IMR-90 (cell line): ENCODE measurements at regions of chrX and their contacts with region 1.

Region 1: GRCh38 chrX:16039834-16040233 is 83.5 kb upstream of the GRPR start:
- DNase-seq: no peak
- ATAC-seq: no peak
- H3K4me3 ChIP-seq: no peak overlapping the region
- H3K27ac ChIP-seq: no peak overlapping the region
- H3K4me1 ChIP-seq: no peaks in the 10 kb centered on the region
- H3K27me3 ChIP-seq: peaks cover 2% of the 10 kb centered on the region; the same call in 1 of the 2 replicates
- CTCF ChIP-seq: no peak
- POLR2A ChIP-seq: no peak
- RAD21 ChIP-seq: no peak

Region 2: GRCh38 chrX:15714529-15714928 is 325.3 kb before region 1 on chrX:
- CTCF ChIA-PET with region 1: no interaction called
- POLR2A ChIA-PET with region 1: no interaction called
- dilution Hi-C with region 1: no loop called
- in situ Hi-C with region 1: no loop called
- intact Hi-C with region 1: no loop called
- DNase-seq: no peak
- ATAC-seq: no peak
- H3K4me3 ChIP-seq: no peak overlapping the region
- H3K27ac ChIP-seq: no peak overlapping the region
- H3K4me1 ChIP-seq: no peaks in the 10 kb centered on the region
- H3K27me3 ChIP-seq: no peaks in the 10 kb centered on the region
- CTCF ChIP-seq: no peak
- POLR2A ChIP-seq: no peak
- RAD21 ChIP-seq: no peak

Region 3: GRCh38 chrX:15877380-15877779 is 162.5 kb before region 1 on chrX:
- CTCF ChIA-PET with region 1: no interaction called
- POLR2A ChIA-PET with region 1: no interaction called
- dilution Hi-C with region 1: no loop called
- in situ Hi-C with region 1: no loop called
- intact Hi-C with region 1: no loop called
- DNase-seq: peak; percentile 68
- ATAC-seq: peak; percentile 40; the same call in 1 of the 2 replicates
- H3K4me3 ChIP-seq: no peak overlapping the region
- H3K27ac ChIP-seq: no peak overlapping the region
- H3K4me1 ChIP-seq: no peaks in the 10 kb centered on the region
- H3K27me3 ChIP-seq: peaks cover 6% of the 10 kb centered on the region; the same call in 1 of the 2 replicates
- CTCF ChIP-seq: no peak
- POLR2A ChIP-seq: no peak
- RAD21 ChIP-seq: no peak

Region 4: GRCh38 chrX:16060252-16060651 is 20.4 kb after region 1 on chrX:
- CTCF ChIA-PET with region 1: no interaction called
- POLR2A ChIA-PET with region 1: no interaction called
- dilution Hi-C with region 1: no loop called
- in situ Hi-C with region 1: no loop called
- intact Hi-C with region 1: loop called (anchors 1 kb)
- DNase-seq: no peak
- ATAC-seq: no peak
- H3K4me3 ChIP-seq: no peak overlapping the region
- H3K27ac ChIP-seq: no peak overlapping the region
- H3K4me1 ChIP-seq: no peaks in the 10 kb centered on the region
- H3K27me3 ChIP-seq: no peaks in the 10 kb centered on the region
- CTCF ChIP-seq: no peak
- POLR2A ChIP-seq: no peak
- RAD21 ChIP-seq: no peak